Activated naive CD4-positive, alpha-beta T cell treated with anti-CD3 and anti-CD28 coated beads for 36 hours (primary cell): ENCODE measurements at regions of chr17 and their contacts with region 1.

Region 1: DNA sequence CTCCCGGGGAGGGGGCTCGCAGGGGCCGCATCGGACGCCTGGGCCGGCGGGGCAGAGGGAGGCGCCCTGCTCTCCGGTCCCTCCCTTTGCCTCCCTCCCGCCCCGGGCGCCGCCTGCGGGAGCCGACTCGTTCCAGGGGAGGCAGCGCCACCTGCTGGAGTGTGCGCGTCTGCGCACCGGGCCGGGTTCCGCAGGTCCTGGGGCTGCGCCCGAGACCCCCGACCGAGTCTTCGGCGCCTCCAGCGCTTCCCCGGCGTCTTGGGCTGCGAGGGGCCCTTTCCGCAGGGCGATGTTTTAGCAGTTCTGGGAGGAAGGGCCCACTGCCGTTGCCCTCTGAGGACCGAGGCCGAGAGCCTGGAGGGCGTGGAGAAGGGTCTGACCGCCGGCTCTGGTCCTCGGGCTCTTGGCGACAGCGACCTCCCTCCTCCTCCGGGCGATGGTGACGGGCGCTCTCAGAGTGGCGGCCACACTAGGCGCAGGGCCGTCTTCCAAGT is 106.3 kb downstream of the SEC14L1 start:
- DNase-seq: peak; percentile 86
- H3K4me3 Mint-ChIP-seq: peak overlapping the region; percentile 46
- H3K27ac Mint-ChIP-seq: no peak overlapping the region
- H3K4me1 Mint-ChIP-seq: peaks cover 3% of the 10 kb centered on the region
- H3K27me3 Mint-ChIP-seq: peaks cover 18% of the 10 kb centered on the region

Region 2: GRCh38 chr17:76868176-76868668 is 378.9 kb before region 1 on chr17 and contains the start of gene MGAT5B:
- CTCF ChIA-PET with region 1: no interaction called
- intact Hi-C with region 1: loop called (anchors 5 kb)
- DNase-seq: peak; percentile 73
- H3K4me3 Mint-ChIP-seq: peak within 1 kb of the TSS; percentile 59
- H3K27ac Mint-ChIP-seq: no peak within 1 kb of the TSS
- H3K4me1 Mint-ChIP-seq: peaks cover 7% of the 10 kb centered on the region
- H3K27me3 Mint-ChIP-seq: peaks cover 21% of the 10 kb centered on the region
- total RNA-seq, gene MGAT5B: 0.19 TPM in 1 of 2 experiments, not detected in the other

Region 3: GRCh38 chr17:77011173-77012011 is 235.7 kb before region 1 on chr17:
- CTCF ChIA-PET with region 1: no interaction called
- intact Hi-C with region 1: loop called (anchors 1 kb)
- DNase-seq: peak; percentile 79
- H3K4me3 Mint-ChIP-seq: no peak overlapping the region
- H3K27ac Mint-ChIP-seq: no peak overlapping the region
- H3K4me1 Mint-ChIP-seq: no peaks in the 10 kb centered on the region
- H3K27me3 Mint-ChIP-seq: no peaks in the 10 kb centered on the region

Region 4: GRCh38 chr17:77088455-77089123 is 158.5 kb before region 1 on chr17:
- CTCF ChIA-PET with region 1: interaction called, 25 read pairs
- intact Hi-C with region 1: loop called (anchors 1 kb)
- DNase-seq: peak; percentile 90
- H3K4me3 Mint-ChIP-seq: peak overlapping the region; percentile 89
- H3K27ac Mint-ChIP-seq: peak overlapping the region; percentile 98
- H3K4me1 Mint-ChIP-seq: peaks cover 53% of the 10 kb centered on the region
- H3K27me3 Mint-ChIP-seq: no peaks in the 10 kb centered on the region

Region 5: DNA sequence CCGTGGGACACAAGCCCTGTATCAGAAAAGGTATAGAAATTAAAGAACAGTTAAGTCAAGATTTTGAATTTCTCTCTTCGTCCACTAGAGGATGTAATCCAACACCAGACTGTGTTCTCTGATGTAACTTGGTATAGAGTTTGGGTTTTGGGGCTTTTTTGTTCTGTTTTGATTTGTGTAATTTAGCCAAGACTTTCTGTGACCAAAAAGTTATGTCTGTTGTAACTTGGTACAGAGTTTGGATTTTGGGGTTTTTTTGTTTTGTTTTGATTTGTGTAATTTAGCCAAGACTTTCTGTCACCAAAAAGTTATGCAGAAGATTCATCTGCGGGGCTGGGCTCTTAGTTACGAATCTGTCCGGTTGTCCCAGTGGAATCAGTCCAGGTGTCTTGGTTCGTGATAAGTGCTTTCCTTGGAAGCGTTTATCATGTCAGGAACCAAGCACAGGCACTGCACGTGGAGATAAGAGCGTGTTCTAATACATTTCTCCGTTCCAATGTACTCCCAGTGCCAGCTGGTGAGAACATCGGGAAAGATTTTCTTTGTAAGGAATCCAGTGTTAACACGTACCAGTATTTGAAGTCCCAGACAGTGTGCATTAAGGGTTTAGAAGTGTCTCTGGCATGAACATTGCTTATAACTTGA is 150.4 kb before region 1 on chr17:
- CTCF ChIA-PET with region 1: no interaction called
- intact Hi-C with region 1: loop called (anchors 1 kb)
- DNase-seq: no peak
- H3K4me3 Mint-ChIP-seq: no peak overlapping the region
- H3K27ac Mint-ChIP-seq: peak overlapping the region; percentile 80
- H3K4me1 Mint-ChIP-seq: peaks cover 46% of the 10 kb centered on the region
- H3K27me3 Mint-ChIP-seq: no peaks in the 10 kb centered on the region

Region 6: GRCh38 chr17:77178563-77178962 is 68.5 kb before region 1 on chr17:
- CTCF ChIA-PET with region 1: no interaction called
- intact Hi-C with region 1: no loop called
- DNase-seq: no peak
- H3K4me3 Mint-ChIP-seq: no peak overlapping the region
- H3K27ac Mint-ChIP-seq: no peak overlapping the region
- H3K4me1 Mint-ChIP-seq: peaks cover 31% of the 10 kb centered on the region
- H3K27me3 Mint-ChIP-seq: no peaks in the 10 kb centered on the region